Activated T-helper 2 cell treated with anti-CD3 and anti-CD28 coated beads, Interferon-gamma antibody, Interleukin-2, Interleukin-4, amounts not matched to agents 10 μg/mL and 5 μg/mL and 100 μg/mL, durations not matched to agents 14 hours and 24 hours and 36 hours (primary cell): ENCODE measurements at regions of chr17 and their contacts with region 1.

Region 1: GRCh38 chr17:35432176-35433074 is at the start of gene SLFN12:
- DNase-seq: peak; percentile 34
- H3K4me3 Mint-ChIP-seq: peak within 1 kb of the TSS; percentile 90
- H3K27ac Mint-ChIP-seq: peak within 1 kb of the TSS; percentile 94
- H3K4me1 Mint-ChIP-seq: peaks cover 51% of the 10 kb centered on the region
- H3K27me3 Mint-ChIP-seq: no peaks in the 10 kb centered on the region
- total RNA-seq, gene SLFN12: 7.5 and 8.8 TPM in 2 replicates

Region 2: DNA sequence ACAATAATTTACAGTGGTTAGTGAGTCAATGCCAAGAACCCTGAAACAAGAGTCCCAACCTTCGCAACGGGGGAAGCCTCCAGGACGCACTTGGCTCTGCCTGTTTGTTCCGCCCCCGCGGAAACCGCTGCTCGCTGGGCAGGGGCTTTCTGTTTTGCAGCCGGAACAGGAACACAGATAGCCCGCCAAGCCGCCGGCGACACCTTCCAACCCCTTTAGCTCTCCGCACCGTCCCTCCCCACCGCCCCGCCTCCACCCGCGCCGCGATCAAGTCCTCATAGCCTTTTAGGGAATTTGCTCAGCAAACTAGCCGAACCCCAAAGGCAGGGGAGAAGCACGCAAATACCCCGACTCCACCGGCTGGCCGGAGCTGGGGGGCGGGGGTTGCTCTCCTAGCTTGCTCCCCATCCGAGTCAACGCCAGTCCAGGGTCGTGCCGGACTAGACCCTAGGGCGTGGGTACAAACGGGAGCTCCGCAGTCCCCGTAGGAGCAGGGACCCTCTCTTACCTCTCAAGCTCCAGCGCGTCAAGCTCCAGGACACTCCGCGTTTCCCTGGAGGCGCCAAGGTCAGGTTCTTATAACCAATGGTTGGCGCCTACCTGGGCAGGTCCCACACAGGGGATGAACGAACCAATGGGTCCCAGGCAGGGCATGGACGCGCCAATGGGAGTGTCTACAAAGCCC is 15.9 kb after region 1 on chr17 and contains the start of gene SLFN13:
- intact Hi-C with region 1: loop called (anchors 2 kb)
- DNase-seq: peak; percentile 83
- H3K4me3 Mint-ChIP-seq: peak within 1 kb of the TSS; percentile 65
- H3K27ac Mint-ChIP-seq: peak within 1 kb of the TSS; percentile 79
- H3K4me1 Mint-ChIP-seq: peaks cover 16% of the 10 kb centered on the region
- H3K27me3 Mint-ChIP-seq: no peaks in the 10 kb centered on the region
- total RNA-seq, gene SLFN13: 41.9 and 42.6 TPM in 2 replicates